K562 (cell line): ENCODE measurements at regions of chr15 and their contacts with region 1.

Region 1: DNA sequence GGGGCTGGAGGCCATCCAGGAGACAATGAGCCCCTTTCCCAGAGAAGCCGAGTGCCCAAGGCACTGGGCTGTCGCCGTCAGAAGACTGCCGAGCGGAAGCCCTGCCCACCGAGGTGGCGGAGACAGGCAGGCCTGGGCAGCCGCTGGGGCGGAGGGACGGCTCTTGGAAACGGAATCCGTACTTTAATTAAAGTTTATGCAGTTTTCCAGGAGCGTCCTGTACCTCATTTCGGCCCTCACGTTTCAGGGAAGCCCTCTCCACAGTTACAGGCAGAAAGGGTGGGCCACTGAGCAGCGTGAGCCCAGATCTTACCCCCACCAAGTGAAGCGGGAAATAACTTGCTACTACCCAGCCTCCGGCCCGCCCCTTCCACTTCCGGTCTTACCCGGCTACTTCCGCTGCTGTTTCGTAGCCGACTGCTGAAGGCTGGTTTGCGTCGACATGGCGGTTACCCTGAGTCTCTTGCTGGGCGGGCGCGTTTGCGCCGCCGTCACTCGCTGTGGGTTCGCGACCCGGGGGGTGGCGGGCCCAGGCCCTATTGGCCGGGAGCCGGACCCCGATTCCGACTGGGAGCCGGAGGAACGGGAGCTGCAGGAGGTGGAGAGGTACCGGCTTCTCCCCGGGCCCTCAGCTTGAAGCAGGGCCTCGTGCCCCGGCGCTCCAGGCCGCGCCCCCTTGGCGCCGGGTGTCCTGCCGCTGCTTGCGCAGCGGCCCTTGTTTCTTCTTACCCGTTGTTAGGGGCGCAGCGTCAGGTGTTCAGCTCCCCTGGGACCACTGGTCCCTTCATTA is at the start of gene NGRN:
- DNase-seq: peak; percentile 89 to 94 (median 91)
- ATAC-seq: peak; percentile 95
- H3K4me3 ChIP-seq: peak within 1 kb of the TSS; percentile 64
- H3K27ac ChIP-seq: peak within 1 kb of the TSS; percentile 86
- H3K4me1 ChIP-seq: peaks cover 14 to 18% of the 10 kb centered on the region in 2 experiments
- H3K27me3 ChIP-seq: no peaks in the 10 kb centered on the region
- CTCF ChIP-seq: no peak
- EP300 ChIP-seq: no peak
- POLR2A ChIP-seq: peak; percentile 98
- RAD21 ChIP-seq: no peak; a peak in 1 of 4 replicates
- polyA plus RNA-seq, gene NGRN: 14.0 to 21.0 TPM

Region 2: DNA sequence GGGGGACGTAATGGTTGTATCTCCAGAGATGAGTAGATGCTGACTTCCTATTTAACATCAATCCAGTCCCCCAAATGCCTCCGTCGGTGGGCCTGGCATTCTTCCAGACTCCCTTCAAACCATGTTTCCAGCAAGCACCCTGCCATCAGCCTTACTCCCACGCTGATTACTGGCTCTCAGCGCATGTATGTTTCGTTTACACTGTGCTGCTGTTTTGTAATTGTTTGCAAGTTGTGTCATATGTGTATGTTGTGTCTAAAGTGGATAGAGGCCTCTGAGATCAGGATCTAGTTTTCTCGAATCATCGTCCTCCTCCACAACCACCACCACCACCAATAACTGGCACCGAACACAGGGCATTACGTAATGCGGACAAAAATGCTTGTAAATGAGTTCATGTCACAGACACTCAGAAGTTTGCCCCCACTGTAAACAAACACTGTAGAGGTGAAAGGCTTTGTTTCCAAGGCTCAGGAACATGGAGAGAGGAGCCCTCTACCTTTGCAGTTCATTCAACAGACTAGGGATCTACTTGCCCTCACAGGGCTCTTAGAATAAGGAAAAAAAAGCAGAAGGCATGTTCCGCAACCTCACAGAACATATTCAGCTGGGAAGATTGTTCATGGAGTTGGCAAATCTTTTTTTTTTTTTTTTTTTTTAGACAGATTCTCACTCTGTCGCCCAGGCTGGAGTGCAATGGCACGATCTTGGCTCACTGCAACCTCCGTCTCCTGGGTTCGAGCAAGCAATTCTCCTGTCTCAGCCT is 110.4 kb before region 1 on chr15:
- CTCF ChIA-PET with region 1: no interaction called
- POLR2A ChIA-PET with region 1: interaction called, 3 read pairs
- in situ Hi-C with region 1: loop called (anchors 5 kb)
- intact Hi-C with region 1: no loop called
- DNase-seq: peak in 2 of 4 experiments; percentile 21 to 42
- ATAC-seq: no peak
- H3K4me3 ChIP-seq: no peak overlapping the region
- H3K27ac ChIP-seq: no peak overlapping the region
- H3K4me1 ChIP-seq: peaks cover 13 to 21% of the 10 kb centered on the region in 2 experiments; a peak in 4 of 5 replicates
- H3K27me3 ChIP-seq: no peaks in the 10 kb centered on the region
- CTCF ChIP-seq: no peak
- EP300 ChIP-seq: no peak
- POLR2A ChIP-seq: no peak
- RAD21 ChIP-seq: no peak

Region 3: GRCh38 chr15:90214553-90215196 is 50.8 kb before region 1 on chr15:
- CTCF ChIA-PET with region 1: no interaction called
- POLR2A ChIA-PET with region 1: no interaction called
- in situ Hi-C with region 1: no loop called
- intact Hi-C with region 1: no loop called
- DNase-seq: no peak
- ATAC-seq: peak; percentile 58
- H3K4me3 ChIP-seq: no peak overlapping the region
- H3K27ac ChIP-seq: no peak overlapping the region
- H3K4me1 ChIP-seq: peaks cover 10 to 40% of the 10 kb centered on the region in 2 experiments; a peak in 4 of 5 replicates
- H3K27me3 ChIP-seq: no peaks in the 10 kb centered on the region
- CTCF ChIP-seq: peak in 2 of 3 experiments; percentile 34 to 36; a peak in 4 of 6 replicates
- EP300 ChIP-seq: no peak
- POLR2A ChIP-seq: no peak
- RAD21 ChIP-seq: no peak; a peak in 1 of 4 replicates

Region 4: GRCh38 chr15:90320061-90320884 is 54.8 kb after region 1 on chr15:
- CTCF ChIA-PET with region 1: no interaction called
- POLR2A ChIA-PET with region 1: no interaction called
- in situ Hi-C with region 1: no loop called
- intact Hi-C with region 1: no loop called
- DNase-seq: peak; percentile 85 to 92 (median 86)
- ATAC-seq: peak; percentile 100
- H3K4me3 ChIP-seq: no peak overlapping the region
- H3K27ac ChIP-seq: peak overlapping the region; percentile 21; the same call in 2 of the 3 replicates
- H3K4me1 ChIP-seq: peaks cover 3 to 4% of the 10 kb centered on the region in 2 experiments; a peak in 2 of 5 replicates
- H3K27me3 ChIP-seq: no peaks in the 10 kb centered on the region
- CTCF ChIP-seq: peak; percentile 99
- EP300 ChIP-seq: no peak
- POLR2A ChIP-seq: no peak
- RAD21 ChIP-seq: peak; percentile 97 to 98

Region 5: DNA sequence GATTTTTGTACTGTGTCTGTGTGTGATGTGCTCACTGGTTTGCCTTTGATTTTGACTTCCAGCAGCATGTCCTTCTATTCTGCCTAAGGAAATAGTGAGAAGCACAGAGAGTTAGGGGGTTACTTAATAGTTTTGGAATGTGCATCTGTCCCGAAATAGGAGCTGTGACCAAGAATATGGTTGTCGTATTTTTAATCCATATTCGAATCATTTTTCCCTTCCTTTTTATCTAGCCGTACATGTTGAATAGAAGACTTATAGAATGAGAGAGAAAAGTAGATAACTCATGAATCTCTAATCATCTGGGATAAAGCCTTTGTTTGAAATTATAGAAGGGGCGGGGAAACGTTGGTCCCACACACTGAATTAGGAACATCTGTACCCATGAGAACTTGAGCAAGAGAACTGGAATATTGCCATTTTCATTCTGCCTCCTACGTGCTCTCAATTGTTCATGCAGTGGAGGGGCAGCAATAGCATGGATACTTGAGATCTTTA is 287.8 kb after region 1 on chr15:
- CTCF ChIA-PET with region 1: no interaction called
- POLR2A ChIA-PET with region 1: no interaction called
- in situ Hi-C with region 1: no loop called
- intact Hi-C with region 1: no loop called
- DNase-seq: no peak
- ATAC-seq: no peak
- H3K4me3 ChIP-seq: no peak overlapping the region
- H3K27ac ChIP-seq: no peak overlapping the region
- H3K4me1 ChIP-seq: peaks cover 11 to 17% of the 10 kb centered on the region in 2 experiments
- H3K27me3 ChIP-seq: no peaks in the 10 kb centered on the region
- CTCF ChIP-seq: no peak
- EP300 ChIP-seq: no peak
- POLR2A ChIP-seq: no peak
- RAD21 ChIP-seq: no peak

Region 6: DNA sequence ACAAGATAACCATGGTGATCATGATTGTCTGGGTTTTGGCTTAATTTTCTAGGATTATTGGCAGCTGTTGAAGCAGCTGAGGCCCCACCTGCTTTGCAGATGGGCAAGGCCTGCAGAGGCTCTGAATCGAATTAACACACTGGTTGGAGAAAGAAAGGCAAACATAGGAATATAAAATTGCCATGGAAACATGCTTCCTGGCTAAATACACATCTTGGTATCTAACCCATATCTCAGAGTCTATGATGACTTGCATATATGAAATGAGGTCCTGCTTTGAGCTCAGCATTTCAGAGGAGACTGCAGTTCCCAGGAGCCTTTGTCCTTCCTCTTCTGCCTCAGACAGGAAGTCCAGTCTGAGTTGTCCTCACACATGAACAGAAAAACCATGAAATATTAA is 810.3 kb after region 1 on chr15:
- CTCF ChIA-PET with region 1: interaction called, 10 read pairs
- POLR2A ChIA-PET with region 1: no interaction called
- in situ Hi-C with region 1: no loop called
- intact Hi-C with region 1: no loop called
- DNase-seq: no peak
- ATAC-seq: 0 out of 3 replicates have a peak, but pooled peaks have one; percentile 29
- H3K4me3 ChIP-seq: no peak overlapping the region
- H3K27ac ChIP-seq: no peak overlapping the region
- H3K4me1 ChIP-seq: no peaks in the 10 kb centered on the region
- H3K27me3 ChIP-seq: peaks cover 8 to 10% of the 10 kb centered on the region in 2 experiments; a peak in 3 of 5 replicates
- CTCF ChIP-seq: no peak
- EP300 ChIP-seq: no peak
- POLR2A ChIP-seq: no peak
- RAD21 ChIP-seq: no peak